ENCODE measurements at regions of chr1 and their contacts with region 1.

Region 1: GRCh38 chr1:204128964-204129896 is 22.6 kb downstream of the ETNK2 start:
- DNase-seq: no peak
- ATAC-seq: peak; percentile 84
- H3K4me3 ChIP-seq: peak overlapping the region; percentile 49 to 84 (median 71)
- H3K27ac ChIP-seq: peak overlapping the region; percentile 25
- H3K4me1 ChIP-seq: peaks cover 34% of the 10 kb centered on the region
- H3K27me3 ChIP-seq: no peaks in the 10 kb centered on the region
- CTCF ChIP-seq: peak; percentile 95
- EP300 ChIP-seq: no peak
- POLR2A ChIP-seq: no peak
- RAD21 ChIP-seq: peak; percentile 93

Region 2: DNA sequence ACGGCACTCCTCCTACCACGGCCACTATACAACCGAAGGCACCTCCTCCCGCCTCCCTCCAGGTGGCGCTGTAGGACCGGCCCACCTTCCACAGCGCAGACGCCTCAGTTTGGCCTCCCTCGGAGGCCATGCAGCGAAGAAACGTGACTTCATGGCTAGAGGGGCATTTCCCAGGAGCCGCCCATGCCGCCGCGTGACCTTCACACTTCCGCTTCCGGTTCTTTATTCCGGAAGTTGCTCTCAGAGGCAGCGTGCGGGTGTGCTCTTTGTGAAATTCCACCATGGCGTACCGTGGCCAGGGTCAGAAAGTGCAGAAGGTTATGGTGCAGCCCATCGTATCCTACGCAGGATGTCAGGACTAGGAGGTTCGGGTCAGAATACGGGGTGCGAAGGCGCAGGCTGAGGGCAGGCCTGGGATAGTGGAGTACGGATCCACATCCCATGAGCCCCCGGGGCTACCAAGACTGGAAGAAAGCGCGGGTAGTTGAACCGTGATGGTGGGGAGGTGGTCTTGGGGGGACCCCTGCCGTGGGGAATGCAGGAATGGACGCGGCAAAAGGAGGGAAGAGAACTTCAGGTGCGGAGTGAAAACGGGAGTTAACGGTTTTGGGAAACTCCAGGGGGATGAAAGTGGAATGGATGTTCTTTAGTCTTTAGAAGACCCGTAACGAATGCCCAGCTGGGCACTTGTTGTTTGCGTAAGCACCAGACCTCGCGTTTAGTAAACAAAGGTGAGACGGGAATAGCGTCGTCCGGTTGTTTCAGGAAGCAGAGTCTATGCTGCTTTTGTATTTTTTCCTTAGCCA is 267.6 kb before region 1 on chr1 and contains the start of gene SNRPE:
- CTCF ChIA-PET with region 1: interaction called, 40 read pairs
- POLR2A ChIA-PET with region 1: interaction called, 7 read pairs
- in situ Hi-C with region 1: no loop called
- intact Hi-C with region 1: loop called (anchors 1 kb)
- DNase-seq: peak; percentile 96
- ATAC-seq: peak; percentile 96
- H3K4me3 ChIP-seq: peak within 1 kb of the TSS; percentile 87 to 90 (median 90)
- H3K27ac ChIP-seq: peak within 1 kb of the TSS; percentile 85
- H3K4me1 ChIP-seq: peaks cover 27% of the 10 kb centered on the region
- H3K27me3 ChIP-seq: no peaks in the 10 kb centered on the region; a peak in 1 of 5 replicates
- CTCF ChIP-seq: peak; percentile 97
- EP300 ChIP-seq: peak in 1 of 2 experiments; percentile 48; a peak in 1 of 4 replicates
- POLR2A ChIP-seq: peak; percentile 71 to 92
- RAD21 ChIP-seq: peak; percentile 96
- total RNA-seq, gene SNRPE: 281 and 397 TPM in 2 replicates

Region 3: DNA sequence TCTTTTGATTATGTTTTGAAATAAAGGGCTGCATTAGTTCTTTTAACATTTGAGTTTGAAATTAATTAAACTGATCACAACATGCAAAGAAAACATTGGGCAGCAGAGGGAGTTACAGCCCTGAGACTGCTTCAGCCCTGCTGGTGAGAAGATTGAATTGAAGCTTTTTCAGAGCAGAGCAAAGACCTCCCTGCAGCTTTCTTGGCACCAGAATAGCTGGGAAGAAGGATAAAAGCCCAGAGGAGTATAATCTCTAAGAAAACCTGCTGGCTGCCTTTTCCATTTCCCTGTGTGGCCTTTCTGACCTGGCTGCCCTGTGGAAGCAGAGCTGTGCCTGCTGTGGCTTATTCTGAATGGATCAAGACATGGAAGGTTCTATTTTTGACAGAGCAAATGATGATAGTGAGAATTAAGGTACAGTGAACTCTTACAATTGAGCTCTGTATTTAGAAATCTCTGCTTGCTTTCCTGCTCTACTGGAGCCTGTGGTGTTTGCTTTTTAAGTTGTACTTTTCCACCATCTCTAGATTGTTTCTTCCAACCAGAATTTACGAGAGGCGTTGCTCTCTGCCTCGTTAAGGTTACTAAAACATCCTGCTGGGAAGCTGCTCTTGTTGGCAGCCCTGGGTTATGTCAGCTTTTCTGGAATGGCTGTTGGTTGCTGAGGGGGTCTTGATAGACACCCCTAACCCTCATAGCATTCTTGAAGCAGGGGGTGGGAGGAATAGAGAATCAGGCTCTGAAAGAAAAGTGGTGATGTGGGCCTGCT is 257.9 kb before region 1 on chr1:
- CTCF ChIA-PET with region 1: interaction called, 89 read pairs
- POLR2A ChIA-PET with region 1: interaction called, 22 read pairs
- in situ Hi-C with region 1: loop called (anchors 5 kb)
- intact Hi-C with region 1: loop called (anchors 1 kb)
- DNase-seq: peak; percentile 62
- ATAC-seq: peak; percentile 90
- H3K4me3 ChIP-seq: no peak overlapping the region
- H3K27ac ChIP-seq: no peak overlapping the region
- H3K4me1 ChIP-seq: peaks cover 17% of the 10 kb centered on the region
- H3K27me3 ChIP-seq: no peaks in the 10 kb centered on the region
- CTCF ChIP-seq: peak; percentile 70
- EP300 ChIP-seq: no peak
- POLR2A ChIP-seq: no peak
- RAD21 ChIP-seq: peak; percentile 88

Region 4: DNA sequence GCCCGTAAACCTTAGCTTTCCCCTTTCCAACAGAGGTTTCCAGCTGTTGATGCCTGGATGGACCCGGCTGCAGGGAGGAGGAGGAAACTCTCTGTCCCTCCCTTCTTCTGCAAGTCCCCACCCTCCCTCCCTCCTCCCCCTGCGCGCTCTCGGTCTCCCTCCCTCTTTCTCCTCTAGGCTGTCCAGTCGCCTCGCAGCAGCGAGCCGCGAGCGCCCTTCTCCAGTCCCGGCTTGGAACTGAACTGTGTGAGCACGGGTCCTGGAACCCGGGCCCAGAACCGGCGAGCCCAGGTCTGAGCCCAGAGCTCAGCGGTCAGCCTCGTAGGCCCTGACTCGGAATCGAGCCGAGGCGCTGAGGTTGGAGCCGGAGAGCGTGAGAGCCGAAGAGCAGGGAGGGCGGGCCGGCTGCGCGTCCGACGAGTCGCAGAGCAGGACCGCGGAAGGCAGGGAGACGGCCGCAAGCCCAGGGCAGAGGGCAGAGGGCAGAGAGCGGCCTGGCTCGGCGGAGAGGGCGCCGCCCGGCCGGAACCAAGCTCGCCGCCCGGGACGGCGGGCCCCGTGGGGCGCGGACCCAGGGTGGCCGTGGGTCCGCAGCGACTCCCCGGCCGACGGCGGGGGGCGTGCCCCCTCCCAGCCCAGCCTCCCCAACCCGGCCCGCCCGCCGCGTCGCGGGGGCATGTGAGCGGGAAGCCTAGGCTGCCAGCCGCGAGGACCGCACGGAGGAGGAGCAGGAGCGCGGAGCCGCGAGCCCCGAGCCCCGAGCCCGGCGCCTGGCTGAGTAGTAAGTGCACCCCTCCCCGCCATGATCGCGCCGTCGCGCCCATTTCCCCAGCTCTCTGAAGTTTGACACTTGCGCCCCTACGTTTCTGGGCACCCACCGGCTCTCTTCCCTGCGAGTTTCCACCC is 56.0 kb before region 1 on chr1 and contains the start of gene SOX13:
- CTCF ChIA-PET with region 1: interaction called, 7 read pairs
- POLR2A ChIA-PET with region 1: interaction called, 31 read pairs
- in situ Hi-C with region 1: no loop called
- intact Hi-C with region 1: loop called (anchors 1 kb)
- DNase-seq: peak; percentile 78
- ATAC-seq: peak; percentile 72
- H3K4me3 ChIP-seq: peak within 1 kb of the TSS; percentile 85 to 96 (median 95)
- H3K27ac ChIP-seq: peak within 1 kb of the TSS; percentile 94
- H3K4me1 ChIP-seq: peaks cover 30% of the 10 kb centered on the region
- H3K27me3 ChIP-seq: peaks cover 0 to 5% of the 10 kb centered on the region in 2 experiments; a peak in 1 of 5 replicates
- CTCF ChIP-seq: peak; percentile 62
- EP300 ChIP-seq: no peak
- POLR2A ChIP-seq: peak in 1 of 2 experiments; percentile 85; a peak in 2 of 4 replicates
- RAD21 ChIP-seq: peak; percentile 70
- total RNA-seq, gene SOX13: 9.3 and 13.3 TPM in 2 replicates

Region 5: GRCh38 chr1:204080163-204080903 is 48.9 kb before region 1 on chr1:
- CTCF ChIA-PET with region 1: interaction called, 4 read pairs
- POLR2A ChIA-PET with region 1: interaction called, 31 read pairs
- in situ Hi-C with region 1: loop called (anchors 5 kb)
- intact Hi-C with region 1: no loop called
- DNase-seq: peak; percentile 76
- ATAC-seq: peak; percentile 58
- H3K4me3 ChIP-seq: peak overlapping the region in 1 of 3 experiments; percentile 23; a peak in 2 of 6 replicates
- H3K27ac ChIP-seq: peak overlapping the region; percentile 36
- H3K4me1 ChIP-seq: peaks cover 94% of the 10 kb centered on the region
- H3K27me3 ChIP-seq: no peaks in the 10 kb centered on the region
- CTCF ChIP-seq: no peak
- EP300 ChIP-seq: no peak
- POLR2A ChIP-seq: no peak
- RAD21 ChIP-seq: no peak

Region 6: GRCh38 chr1:204145033-204145504 is 15.8 kb after region 1 on chr1:
- CTCF ChIA-PET with region 1: no interaction called
- POLR2A ChIA-PET with region 1: interaction called, 25 read pairs
- in situ Hi-C with region 1: no loop called
- intact Hi-C with region 1: loop called (anchors 1 kb)
- DNase-seq: peak; percentile 97
- ATAC-seq: peak; percentile 86
- H3K4me3 ChIP-seq: no peak overlapping the region
- H3K27ac ChIP-seq: peak overlapping the region; percentile 65
- H3K4me1 ChIP-seq: peaks cover 76% of the 10 kb centered on the region
- H3K27me3 ChIP-seq: no peaks in the 10 kb centered on the region
- CTCF ChIP-seq: 0 out of 2 replicates have a peak, but pooled peaks have one; percentile 11
- EP300 ChIP-seq: peak; percentile 76 to 92; a peak in 3 of 4 replicates
- POLR2A ChIP-seq: no peak
- RAD21 ChIP-seq: no peak

Measured in HepG2 (cell line).